Stomach (tissue), 19 donors: ENCODE measurements at regions of chr12 and their contacts with region 1.

Region 1: DNA sequence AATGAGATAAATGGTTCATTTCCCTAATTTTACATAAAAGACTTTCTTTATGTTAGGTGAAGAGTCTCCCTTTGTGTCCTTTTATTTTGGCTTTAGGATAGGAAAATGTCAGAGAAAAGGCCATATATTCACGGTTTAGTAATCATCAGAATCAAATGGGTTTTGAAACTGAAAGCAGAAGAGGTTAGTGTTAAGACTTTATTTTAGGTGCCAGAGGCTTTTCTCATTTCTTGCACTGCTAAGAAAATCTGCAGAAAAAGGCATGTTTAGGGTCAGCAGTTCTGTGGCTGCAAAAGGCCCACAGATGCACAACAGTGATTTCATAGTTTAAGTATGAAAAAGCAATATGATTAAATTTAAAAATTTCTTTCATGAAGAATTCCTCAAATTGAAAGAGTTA is 80.4 kb upstream of the SINHCAF start:
- DNase-seq: no peak
- H3K4me3 ChIP-seq: no peak overlapping the region
- H3K27ac ChIP-seq: no peak overlapping the region
- H3K4me1 ChIP-seq: peaks cover 0 to 7% (median 0%) of the 10 kb centered on the region in 4 donors
- H3K27me3 ChIP-seq: no peaks in the 10 kb centered on the region
- CTCF ChIP-seq: no peak
- EP300 ChIP-seq: no peak
- POLR2A ChIP-seq: no peak

Region 2: GRCh38 chr12:31317471-31318395 is 88.6 kb before region 1 on chr12:
- intact Hi-C with region 1: no loop called
- DNase-seq: peak in 1 of 2 donors; percentile 44
- H3K4me3 ChIP-seq: peak overlapping the region; percentile 24 to 37 (median 30)
- H3K27ac ChIP-seq: peak overlapping the region in 4 of 5 donors; percentile 31 to 67 (median 40)
- H3K4me1 ChIP-seq: peaks cover 17 to 66% (median 38%) of the 10 kb centered on the region in 4 donors
- H3K27me3 ChIP-seq: no peaks in the 10 kb centered on the region
- CTCF ChIP-seq: no peak
- EP300 ChIP-seq: no peak
- POLR2A ChIP-seq: no peak

Region 3: DNA sequence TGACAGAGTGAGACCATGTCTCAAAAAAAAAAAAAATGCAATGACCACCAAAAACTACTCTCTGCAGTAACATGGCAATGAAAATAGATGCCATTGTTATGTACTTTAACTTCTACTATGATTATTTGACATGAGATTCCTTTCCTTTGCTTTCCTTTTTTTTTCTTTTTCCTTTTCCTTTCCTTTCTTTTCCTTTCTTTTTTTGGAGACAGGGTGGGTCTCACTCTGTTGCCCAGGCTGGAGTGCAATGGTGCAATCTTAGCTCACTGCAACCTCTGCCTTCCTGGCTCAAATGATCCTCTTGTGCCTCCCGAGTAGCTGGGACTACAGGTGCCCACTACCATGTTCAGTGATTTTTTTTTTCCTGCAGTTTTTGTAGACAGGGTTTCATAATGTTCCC is 228.3 kb after region 1 on chr12:
- intact Hi-C with region 1: loop called (anchors 5 kb)
- DNase-seq: no peak
- H3K4me3 ChIP-seq: no peak overlapping the region
- H3K27ac ChIP-seq: no peak overlapping the region
- H3K4me1 ChIP-seq: peaks cover 0 to 12% (median 8%) of the 10 kb centered on the region in 4 donors
- H3K27me3 ChIP-seq: no peaks in the 10 kb centered on the region
- CTCF ChIP-seq: no peak
- EP300 ChIP-seq: no peak
- POLR2A ChIP-seq: no peak